PC-9 (cell line): ENCODE measurements at regions of chr2 and their contacts with region 1.

Region 1: DNA sequence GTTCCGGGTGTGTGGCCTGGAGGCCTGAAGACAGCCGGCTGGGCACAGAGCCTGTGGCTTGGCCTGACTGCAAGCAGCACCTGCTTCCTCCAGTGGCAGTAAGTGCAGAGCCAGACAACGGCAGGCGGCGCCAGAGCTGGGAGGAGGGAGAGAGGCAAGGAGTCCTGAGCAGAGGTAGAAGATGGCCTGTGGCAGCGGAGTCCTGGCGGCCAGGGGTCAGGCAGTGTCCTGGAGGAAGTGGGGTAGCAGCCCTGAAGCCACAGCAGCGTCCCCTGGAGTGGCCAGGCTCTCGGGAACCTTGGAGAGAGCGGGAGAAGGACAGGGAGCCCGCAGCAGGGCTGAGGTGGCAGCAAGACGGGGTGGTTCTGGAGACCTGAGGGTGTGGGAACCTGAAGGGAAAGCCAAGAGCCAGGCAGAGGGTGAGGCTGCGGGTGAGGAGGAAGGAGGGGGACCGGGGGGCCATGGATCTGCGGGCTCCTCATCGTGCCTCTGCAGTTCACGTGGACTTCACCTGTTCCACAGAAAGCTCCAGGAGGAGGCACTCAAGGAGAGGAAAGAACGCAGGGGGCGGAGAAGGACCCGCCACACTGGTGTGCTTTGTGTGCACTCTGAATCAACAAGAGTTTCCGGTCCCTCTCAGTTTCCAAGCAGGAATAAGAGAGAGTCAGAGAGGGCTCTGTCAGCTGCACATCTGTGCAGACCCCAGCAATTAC is 85.9 kb downstream of the USP40 start:
- DNase-seq: peak in 1 of 2 experiments; percentile 33
- H3K4me3 ChIP-seq: no peak overlapping the region
- H3K27ac ChIP-seq: no peak overlapping the region
- H3K4me1 ChIP-seq: peaks cover 12% of the 10 kb centered on the region
- H3K27me3 ChIP-seq: no peaks in the 10 kb centered on the region
- CTCF ChIP-seq: no peak

Region 2: DNA sequence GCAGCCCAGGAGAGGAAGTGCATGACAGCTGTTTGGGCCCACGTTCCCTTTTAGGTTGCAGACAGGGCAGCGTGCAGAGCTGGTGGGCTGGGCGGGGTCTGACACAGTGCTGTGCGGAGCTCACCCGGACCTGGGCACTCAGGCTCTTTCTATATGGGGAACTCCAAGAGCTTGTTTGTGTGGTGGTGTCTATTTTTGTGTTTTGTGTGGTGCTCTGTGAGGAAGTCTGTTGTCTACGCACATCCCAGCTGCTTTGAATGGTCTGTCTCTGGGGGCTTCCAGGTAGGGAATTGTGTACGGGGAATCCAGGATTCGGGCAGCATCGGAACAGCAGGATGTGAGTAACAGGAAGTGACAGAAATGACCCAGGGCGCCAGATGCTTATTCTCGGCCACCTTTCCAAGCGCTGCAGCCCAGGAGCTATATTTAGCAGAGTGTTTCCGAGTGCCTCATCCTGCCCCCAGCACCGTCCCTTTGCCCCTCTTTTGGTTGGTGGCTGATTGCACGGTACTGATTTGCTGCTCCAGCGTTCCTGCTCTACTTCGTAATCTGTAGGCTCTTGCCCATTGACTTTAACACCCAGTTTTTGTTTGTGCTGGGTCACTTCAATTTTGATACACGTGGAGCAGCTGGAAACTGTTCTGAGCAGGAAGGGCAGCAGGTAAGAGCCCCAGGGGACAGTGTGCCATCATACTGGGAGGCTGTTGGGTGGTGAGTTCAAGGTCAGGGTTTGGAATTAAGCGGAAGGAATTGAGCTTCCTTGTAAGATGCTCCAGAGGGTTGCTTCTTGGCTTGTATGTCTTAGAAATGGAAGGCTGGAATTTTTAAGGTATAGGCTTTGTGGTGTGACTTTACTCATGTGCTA is 61.7 kb before region 1 on chr2:
- CTCF ChIA-PET with region 1: no interaction called
- POLR2A ChIA-PET with region 1: interaction called, 21 read pairs
- intact Hi-C with region 1: no loop called
- DNase-seq: no peak
- H3K4me3 ChIP-seq: no peak overlapping the region
- H3K27ac ChIP-seq: no peak overlapping the region
- H3K4me1 ChIP-seq: peaks cover 57% of the 10 kb centered on the region
- H3K27me3 ChIP-seq: no peaks in the 10 kb centered on the region
- CTCF ChIP-seq: no peak

Region 3: DNA sequence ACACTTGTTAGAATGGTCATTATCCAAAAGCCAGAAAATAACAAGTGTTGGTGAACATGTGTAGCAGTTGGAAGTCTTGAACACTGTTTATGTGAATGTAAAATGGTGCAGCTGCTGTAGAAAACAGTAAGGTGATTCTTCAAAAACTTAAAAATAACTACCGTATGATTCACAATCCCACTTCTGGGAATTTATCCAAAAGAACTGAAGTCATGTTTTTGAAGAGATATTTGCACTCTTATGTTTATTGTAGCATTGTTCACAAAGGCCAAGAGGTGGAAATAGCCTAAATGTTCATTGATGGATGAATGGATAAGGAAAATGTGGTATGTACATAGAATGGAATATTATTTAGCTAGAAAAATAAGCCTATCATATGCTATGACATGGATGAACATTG is 563.5 kb after region 1 on chr2:
- CTCF ChIA-PET with region 1: no interaction called
- POLR2A ChIA-PET with region 1: no interaction called
- intact Hi-C with region 1: no loop called
- DNase-seq: no peak
- H3K4me3 ChIP-seq: no peak overlapping the region
- H3K27ac ChIP-seq: no peak overlapping the region
- H3K4me1 ChIP-seq: no peaks in the 10 kb centered on the region
- H3K27me3 ChIP-seq: no peaks in the 10 kb centered on the region
- CTCF ChIP-seq: no peak